CD8-positive, alpha-beta memory T cell (primary cell): ENCODE measurements at regions of chr1 and their contacts with region 1.

Region 1: GRCh38 chr1:156860113-156860627 is 495 bp upstream of the NTRK1 start:
- DNase-seq: peak; percentile 46 to 71 (median 49)
- H3K4me3 ChIP-seq: peak overlapping the region; percentile 64
- H3K4me3 Mint-ChIP-seq: peak overlapping the region; percentile 74 to 90 (median 81)
- H3K27ac ChIP-seq: no peak overlapping the region
- H3K27ac Mint-ChIP-seq: peak overlapping the region in 4 of 8 donors; percentile 7 to 85 (median 33)
- H3K4me1 ChIP-seq: peaks cover 21% of the 10 kb centered on the region
- H3K4me1 Mint-ChIP-seq: peaks cover 14 to 36% (median 19%) of the 10 kb centered on the region in 3 donors
- H3K27me3 ChIP-seq: peaks cover 40% of the 10 kb centered on the region
- H3K27me3 Mint-ChIP-seq: peaks cover 41 to 61% of the 10 kb centered on the region in 2 donors

Region 2: DNA sequence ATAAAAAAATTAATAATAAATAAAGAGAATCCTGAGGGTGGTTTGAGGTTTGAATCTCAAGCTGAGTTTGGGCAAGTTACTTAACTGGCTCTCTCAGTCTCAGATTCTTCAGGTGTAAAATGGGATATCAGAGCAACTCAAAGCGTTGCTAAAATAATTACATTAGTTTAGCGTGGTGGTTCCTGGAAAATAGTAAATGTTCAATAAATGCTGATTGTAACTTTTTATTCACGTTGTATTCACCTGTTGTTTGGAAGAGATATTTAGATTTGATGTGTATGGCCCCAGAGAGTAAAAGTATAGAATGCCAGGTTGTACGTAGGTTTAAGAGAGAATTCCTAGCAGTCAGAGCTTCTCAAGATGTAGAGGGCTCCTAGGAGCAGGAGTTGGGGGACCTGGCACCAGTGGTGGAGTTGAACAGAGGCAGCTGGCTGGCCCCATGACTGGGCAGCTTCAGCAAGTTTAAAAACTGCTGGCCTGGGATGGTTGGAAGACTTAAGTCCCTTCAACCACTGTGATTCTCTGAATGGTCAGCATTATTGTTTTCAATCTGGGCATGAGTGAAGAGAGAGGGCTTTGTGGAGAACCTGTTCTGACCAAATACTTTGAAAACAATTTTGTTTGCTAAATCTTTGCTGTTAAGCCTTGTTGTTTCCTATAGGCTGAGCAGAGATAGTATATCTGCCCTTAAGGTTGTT is 70.4 kb before region 1 on chr1:
- CTCF ChIA-PET with region 1: interaction called, 146 read pairs
- POLR2A ChIA-PET with region 1: no interaction called
- DNase-seq: no peak
- H3K4me3 ChIP-seq: no peak overlapping the region
- H3K4me3 Mint-ChIP-seq: no peak overlapping the region
- H3K27ac ChIP-seq: no peak overlapping the region
- H3K27ac Mint-ChIP-seq: peak overlapping the region in 3 of 8 donors; percentile 46 to 86 (median 67)
- H3K4me1 ChIP-seq: no peaks in the 10 kb centered on the region
- H3K4me1 Mint-ChIP-seq: peaks cover 7 to 10% (median 10%) of the 10 kb centered on the region in 3 donors
- H3K27me3 ChIP-seq: no peaks in the 10 kb centered on the region
- H3K27me3 Mint-ChIP-seq: peaks cover 0 to 2% of the 10 kb centered on the region in 2 donors

Region 3: GRCh38 chr1:156805766-156806511 is 54.2 kb before region 1 on chr1:
- CTCF ChIA-PET with region 1: interaction called, 146 read pairs
- POLR2A ChIA-PET with region 1: interaction called, 3 read pairs
- DNase-seq: no peak
- H3K4me3 ChIP-seq: no peak overlapping the region
- H3K4me3 Mint-ChIP-seq: no peak overlapping the region
- H3K27ac ChIP-seq: no peak overlapping the region
- H3K27ac Mint-ChIP-seq: peak overlapping the region; percentile 52 to 94 (median 74)
- H3K4me1 ChIP-seq: peaks cover 15% of the 10 kb centered on the region
- H3K4me1 Mint-ChIP-seq: peaks cover 44 to 69% (median 47%) of the 10 kb centered on the region in 3 donors
- H3K27me3 ChIP-seq: no peaks in the 10 kb centered on the region
- H3K27me3 Mint-ChIP-seq: no peaks in the 10 kb centered on the region

Region 4: GRCh38 chr1:156838981-156839410 is 21.2 kb before region 1 on chr1:
- CTCF ChIA-PET with region 1: interaction called, 109 read pairs
- POLR2A ChIA-PET with region 1: interaction called, 3 read pairs
- DNase-seq: peak; percentile 29 to 63 (median 45)
- H3K4me3 ChIP-seq: no peak overlapping the region
- H3K4me3 Mint-ChIP-seq: no peak overlapping the region
- H3K27ac ChIP-seq: no peak overlapping the region
- H3K27ac Mint-ChIP-seq: peak overlapping the region in 4 of 8 donors; percentile 22 to 84 (median 70)
- H3K4me1 ChIP-seq: no peaks in the 10 kb centered on the region
- H3K4me1 Mint-ChIP-seq: peaks cover 10 to 17% (median 17%) of the 10 kb centered on the region in 3 donors
- H3K27me3 ChIP-seq: peaks cover 12% of the 10 kb centered on the region
- H3K27me3 Mint-ChIP-seq: peaks cover 32 to 76% of the 10 kb centered on the region in 2 donors

Region 5: GRCh38 chr1:156892190-156893047 is 32.2 kb after region 1 on chr1:
- CTCF ChIA-PET with region 1: interaction called, 32 read pairs
- POLR2A ChIA-PET with region 1: no interaction called
- DNase-seq: peak; percentile 76 to 86 (median 77)
- H3K4me3 ChIP-seq: peak overlapping the region; percentile 20
- H3K4me3 Mint-ChIP-seq: peak overlapping the region; percentile 70 to 83 (median 75)
- H3K27ac ChIP-seq: no peak overlapping the region
- H3K27ac Mint-ChIP-seq: peak overlapping the region in 1 of 8 donors; percentile 72
- H3K4me1 ChIP-seq: peaks cover 16% of the 10 kb centered on the region
- H3K4me1 Mint-ChIP-seq: peaks cover 15 to 20% (median 16%) of the 10 kb centered on the region in 3 donors
- H3K27me3 ChIP-seq: peaks cover 3% of the 10 kb centered on the region
- H3K27me3 Mint-ChIP-seq: peaks cover 46 to 69% of the 10 kb centered on the region in 2 donors

Region 6: DNA sequence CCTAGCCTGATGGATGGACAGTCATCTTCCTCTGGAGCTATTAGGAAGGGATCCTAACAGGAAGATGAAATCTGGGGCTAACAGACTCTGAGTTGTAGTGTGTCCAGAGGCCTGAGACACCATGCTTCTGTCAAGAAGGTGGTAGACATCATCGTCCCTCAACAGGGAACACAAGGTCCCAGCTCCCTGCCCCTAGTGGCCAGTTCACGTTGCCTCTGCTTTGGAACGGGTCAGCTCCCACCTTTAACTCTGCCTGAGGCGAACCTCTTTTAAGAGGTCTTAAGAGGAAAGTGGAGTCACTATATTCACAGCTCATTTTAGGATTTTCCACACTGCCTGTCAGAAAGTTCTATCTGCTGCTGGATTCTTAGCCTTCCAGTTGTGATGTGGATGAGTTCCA is 88.5 kb after region 1 on chr1:
- CTCF ChIA-PET with region 1: no interaction called
- POLR2A ChIA-PET with region 1: no interaction called
- DNase-seq: no peak
- H3K4me3 ChIP-seq: no peak overlapping the region
- H3K4me3 Mint-ChIP-seq: no peak overlapping the region
- H3K27ac ChIP-seq: no peak overlapping the region
- H3K27ac Mint-ChIP-seq: peak overlapping the region in 1 of 8 donors; percentile 59
- H3K4me1 ChIP-seq: no peaks in the 10 kb centered on the region
- H3K4me1 Mint-ChIP-seq: no peaks in the 10 kb centered on the region
- H3K27me3 ChIP-seq: no peaks in the 10 kb centered on the region
- H3K27me3 Mint-ChIP-seq: peaks cover 0 to 11% of the 10 kb centered on the region in 2 donors

Region 7: GRCh38 chr1:157099630-157100009 is 239.4 kb after region 1 on chr1 and contains the start of gene ETV3L:
- CTCF ChIA-PET with region 1: no interaction called
- POLR2A ChIA-PET with region 1: no interaction called
- DNase-seq: no peak
- H3K4me3 ChIP-seq: no peak within 1 kb of the TSS
- H3K4me3 Mint-ChIP-seq: no peak within 1 kb of the TSS
- H3K27ac ChIP-seq: no peak within 1 kb of the TSS
- H3K27ac Mint-ChIP-seq: peak within 1 kb of the TSS in 1 of 8 donors; percentile 69
- H3K4me1 ChIP-seq: no peaks in the 10 kb centered on the region
- H3K4me1 Mint-ChIP-seq: no peaks in the 10 kb centered on the region
- H3K27me3 ChIP-seq: no peaks in the 10 kb centered on the region
- H3K27me3 Mint-ChIP-seq: peaks cover 6% of the 10 kb centered on the region in 2 donors
- total RNA-seq, gene ETV3L: not detected